ENCODE measurements at regions of chr16 and their contacts with region 1.

Region 1: GRCh38 chr16:10971560-10971961 is 27.2 kb downstream of the CLEC16A start:
- DNase-seq: peak; percentile 73
- H3K4me3 ChIP-seq: no peak overlapping the region
- H3K27ac ChIP-seq: no peak overlapping the region
- H3K4me1 ChIP-seq: no peaks in the 10 kb centered on the region
- H3K27me3 ChIP-seq: no peaks in the 10 kb centered on the region
- CTCF ChIP-seq: peak; percentile 56 to 57
- POLR2A ChIP-seq: no peak

Region 2: GRCh38 chr16:10743610-10744393 is 227.8 kb before region 1 on chr16 and contains the start of gene NUBP1:
- CTCF ChIA-PET with region 1: no interaction called
- POLR2A ChIA-PET with region 1: no interaction called
- dilution Hi-C with region 1: no loop called
- intact Hi-C with region 1: no loop called
- DNase-seq: peak; percentile 100
- H3K4me3 ChIP-seq: peak within 1 kb of the TSS; percentile 3 to 72 (median 56)
- H3K27ac ChIP-seq: peak within 1 kb of the TSS; percentile 80
- H3K4me1 ChIP-seq: peaks cover 7% of the 10 kb centered on the region
- H3K27me3 ChIP-seq: no peaks in the 10 kb centered on the region
- CTCF ChIP-seq: no peak
- POLR2A ChIP-seq: peak; percentile 86
- total RNA-seq, gene NUBP1: 23.6 and 28.7 TPM in 2 replicates

Region 3: GRCh38 chr16:10981697-10982216 is 10.2 kb after region 1 on chr16:
- CTCF ChIA-PET with region 1: interaction called, 16 read pairs
- POLR2A ChIA-PET with region 1: no interaction called
- dilution Hi-C with region 1: no loop called
- intact Hi-C with region 1: no loop called
- DNase-seq: no peak
- H3K4me3 ChIP-seq: no peak overlapping the region
- H3K27ac ChIP-seq: no peak overlapping the region
- H3K4me1 ChIP-seq: peaks cover 13% of the 10 kb centered on the region
- H3K27me3 ChIP-seq: no peaks in the 10 kb centered on the region
- CTCF ChIP-seq: peak; percentile 23 to 24
- POLR2A ChIP-seq: no peak

Region 4: DNA sequence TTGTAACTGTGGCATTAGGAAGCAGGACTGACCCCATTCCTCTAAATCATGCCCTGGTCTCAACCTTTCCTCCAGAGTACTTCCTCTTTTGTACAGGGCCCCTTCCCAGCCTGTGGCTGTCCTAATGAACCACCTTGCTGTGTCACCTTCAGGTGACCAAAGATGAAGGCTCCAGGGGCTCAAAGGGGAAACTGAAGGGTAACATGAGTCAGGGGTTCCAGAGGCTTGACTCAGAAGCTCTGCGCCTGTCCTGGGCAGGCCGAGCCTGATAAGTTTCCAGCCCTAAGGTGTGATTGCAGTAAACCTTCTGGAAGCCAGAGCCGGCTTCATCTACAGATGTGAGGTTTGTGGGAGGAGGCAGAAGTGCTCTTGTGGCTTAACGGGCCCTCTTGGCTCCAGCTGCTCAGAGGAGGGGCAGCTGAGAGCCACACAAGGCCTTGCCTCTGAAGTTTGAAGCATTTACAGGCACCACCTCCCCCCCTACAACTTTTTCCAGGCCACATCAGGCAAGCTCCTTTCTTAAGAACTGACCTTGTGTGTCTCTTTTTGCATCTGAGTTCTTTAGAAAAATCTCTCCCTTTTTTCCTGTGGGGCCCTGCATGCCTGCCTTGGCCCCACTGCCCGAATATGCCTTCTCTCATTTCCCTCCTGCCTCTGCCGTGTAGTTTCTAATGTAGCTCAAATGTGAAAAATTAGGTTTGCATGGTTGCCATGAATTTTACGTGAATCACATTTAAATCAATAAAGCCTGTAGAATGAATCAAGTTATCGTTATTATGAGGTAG is 122.7 kb after region 1 on chr16:
- CTCF ChIA-PET with region 1: no interaction called
- POLR2A ChIA-PET with region 1: no interaction called
- dilution Hi-C with region 1: no loop called
- intact Hi-C with region 1: no loop called
- DNase-seq: no peak
- H3K4me3 ChIP-seq: no peak overlapping the region
- H3K27ac ChIP-seq: no peak overlapping the region
- H3K4me1 ChIP-seq: peaks cover 10% of the 10 kb centered on the region
- H3K27me3 ChIP-seq: no peaks in the 10 kb centered on the region
- CTCF ChIP-seq: no peak
- POLR2A ChIP-seq: no peak

Region 5: GRCh38 chr16:11356573-11357331 is 385.2 kb after region 1 on chr16:
- CTCF ChIA-PET with region 1: interaction called, 28 read pairs
- POLR2A ChIA-PET with region 1: no interaction called
- dilution Hi-C with region 1: no loop called
- intact Hi-C with region 1: loop called (anchors 1 kb)
- DNase-seq: peak; percentile 51
- H3K4me3 ChIP-seq: no peak overlapping the region
- H3K27ac ChIP-seq: no peak overlapping the region
- H3K4me1 ChIP-seq: peaks cover 9% of the 10 kb centered on the region
- H3K27me3 ChIP-seq: peaks cover 0 to 4% of the 10 kb centered on the region in 2 experiments
- CTCF ChIP-seq: peak; percentile 65 to 83
- POLR2A ChIP-seq: no peak